ENCODE measurements at regions of chr12 and their contacts with region 1.

Region 1: DNA sequence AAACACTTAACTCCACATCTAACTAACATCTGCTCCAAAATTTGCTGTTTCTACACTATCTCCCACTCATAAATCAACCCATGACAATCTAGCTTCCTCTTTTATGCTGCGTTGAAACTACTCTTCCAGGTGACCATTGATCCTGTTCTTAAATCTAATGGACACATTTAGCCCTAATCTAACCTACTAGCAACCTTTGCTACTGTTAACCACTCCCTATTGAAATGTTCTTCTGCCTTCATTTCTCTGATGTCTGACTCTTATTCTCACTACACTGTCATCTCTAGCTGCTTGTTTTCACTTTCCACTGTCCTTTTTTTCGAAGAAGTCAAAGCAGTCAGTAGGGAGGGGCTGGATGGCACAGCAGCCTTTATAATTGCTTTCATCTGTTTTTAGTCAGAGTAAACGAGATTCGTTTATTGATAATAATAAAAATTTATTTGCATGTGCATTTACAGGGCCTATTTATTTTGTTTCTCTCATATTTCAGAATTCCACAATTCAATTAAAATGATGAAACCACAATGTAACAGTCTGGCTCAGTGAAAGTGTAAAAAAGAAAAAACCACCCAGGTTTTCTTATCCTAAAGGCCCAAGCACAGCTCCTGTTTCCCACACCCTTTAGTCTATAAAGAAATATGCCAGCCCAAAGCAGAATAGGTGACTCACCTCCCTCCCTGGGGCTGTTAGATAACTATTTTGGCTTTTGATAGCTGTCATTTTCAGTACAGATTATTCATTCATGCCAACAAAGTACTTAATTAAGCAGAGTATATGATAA is 44.9 kb downstream of the ATP2B1 start:
- DNase-seq: peak; percentile 49
- H3K4me3 ChIP-seq: no peak overlapping the region
- H3K27ac ChIP-seq: no peak overlapping the region
- H3K4me1 ChIP-seq: peaks cover 11% of the 10 kb centered on the region
- CTCF ChIP-seq: no peak

Region 2: DNA sequence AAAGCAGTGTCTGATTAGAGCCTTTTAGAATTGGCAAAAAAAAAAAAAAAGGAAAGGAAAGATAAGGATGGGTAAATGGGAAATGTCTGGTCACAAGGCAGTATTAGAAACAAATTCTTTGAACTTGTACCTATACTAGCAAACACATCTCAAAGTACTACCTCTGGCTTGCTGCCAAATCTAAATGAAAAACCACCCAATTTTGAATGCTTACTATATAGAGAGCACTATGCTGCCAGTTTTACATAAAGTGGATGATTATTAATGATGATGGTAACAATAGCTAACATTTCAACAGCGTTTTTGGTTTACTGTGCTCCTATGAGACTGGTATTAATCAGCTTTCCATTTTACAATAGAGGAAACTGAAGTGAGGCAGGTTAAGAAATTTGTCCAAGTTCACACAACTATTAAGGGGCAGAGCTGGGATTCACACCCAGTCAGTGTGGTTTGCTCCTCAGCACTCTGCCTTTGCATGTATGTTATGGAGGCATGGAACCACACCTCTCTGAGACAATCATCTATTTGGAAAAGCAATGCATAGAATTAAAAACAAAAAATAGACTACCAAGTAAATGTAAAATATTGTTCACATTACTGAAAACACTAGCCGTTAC is 10.7 kb after region 1 on chr12:
- CTCF ChIA-PET with region 1: interaction called, 3 read pairs
- POLR2A ChIA-PET with region 1: interaction called, 12 read pairs
- intact Hi-C with region 1: no loop called
- DNase-seq: no peak
- H3K4me3 ChIP-seq: no peak overlapping the region
- H3K27ac ChIP-seq: no peak overlapping the region
- H3K4me1 ChIP-seq: peaks cover 4% of the 10 kb centered on the region
- CTCF ChIP-seq: no peak